Right cardiac atrium (tissue), 5 donors: ENCODE measurements at regions of chr18 and their contacts with region 1.

Region 1: GRCh38 chr18:36792634-36793283 is 36.0 kb downstream of the TPGS2 start:
- DNase-seq: no peak
- ATAC-seq: no peak
- H3K4me3 ChIP-seq: no peak overlapping the region
- H3K27ac ChIP-seq: no peak overlapping the region
- H3K4me1 ChIP-seq: peaks cover 2% of the 10 kb centered on the region
- H3K27me3 ChIP-seq: no peaks in the 10 kb centered on the region

Region 2: GRCh38 chr18:36733150-36733549 is 59.6 kb before region 1 on chr18:
- intact Hi-C with region 1: loop called in 1 of 4 experiments (anchors 2 kb)
- DNase-seq: no peak
- ATAC-seq: no peak
- H3K4me3 ChIP-seq: no peak overlapping the region
- H3K27ac ChIP-seq: no peak overlapping the region
- H3K4me1 ChIP-seq: no peaks in the 10 kb centered on the region
- H3K27me3 ChIP-seq: no peaks in the 10 kb centered on the region

Region 3: DNA sequence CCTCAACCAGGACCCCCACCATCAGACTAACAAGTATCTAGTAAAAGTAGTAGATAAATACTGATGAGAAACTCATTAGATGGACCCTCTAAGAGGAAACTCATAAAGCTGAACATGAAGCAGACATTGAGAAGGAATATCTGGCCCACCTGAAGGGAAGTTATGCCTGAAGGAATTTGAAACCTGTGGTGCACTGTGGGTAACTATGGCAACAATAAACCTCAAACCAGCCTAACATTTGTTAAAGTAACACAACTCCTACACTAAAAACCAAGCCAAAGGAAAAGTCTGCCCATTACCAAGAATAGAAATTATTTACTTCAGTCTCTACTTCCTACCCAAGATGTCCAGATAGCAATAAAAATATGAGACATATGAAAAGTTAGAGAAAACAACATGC is 79.6 kb after region 1 on chr18:
- intact Hi-C with region 1: no loop called
- DNase-seq: no peak
- ATAC-seq: no peak
- H3K4me3 ChIP-seq: no peak overlapping the region
- H3K27ac ChIP-seq: no peak overlapping the region
- H3K4me1 ChIP-seq: no peaks in the 10 kb centered on the region
- H3K27me3 ChIP-seq: no peaks in the 10 kb centered on the region